MCF 10A (cell line): ENCODE measurements at regions of chr1 and their contacts with region 1.

Region 1: DNA sequence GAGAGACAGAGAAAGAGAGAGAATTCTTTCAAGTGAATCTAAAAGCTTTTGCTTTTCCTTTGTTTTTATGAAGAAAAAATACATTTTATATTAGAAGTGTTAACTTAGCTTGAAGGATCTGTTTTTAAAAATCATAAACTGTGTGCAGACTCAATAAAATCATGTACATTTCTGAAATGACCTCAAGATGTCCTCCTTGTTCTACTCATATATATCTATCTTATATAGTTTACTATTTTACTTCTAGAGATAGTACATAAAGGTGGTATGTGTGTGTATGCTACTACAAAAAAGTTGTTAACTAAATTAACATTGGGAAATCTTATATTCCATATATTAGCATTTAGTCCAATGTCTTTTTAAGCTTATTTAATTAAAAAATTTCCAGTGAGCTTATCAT is 117.6 kb downstream of the PTPRC start:
- DNase-seq: peak; percentile 45
- H3K4me3 Mint-ChIP-seq: no peak overlapping the region
- H3K27ac Mint-ChIP-seq: no peak overlapping the region
- H3K4me1 Mint-ChIP-seq: no peaks in the 10 kb centered on the region
- H3K27me3 Mint-ChIP-seq: no peaks in the 10 kb centered on the region
- CTCF ChIP-seq: peak; percentile 50

Region 2: DNA sequence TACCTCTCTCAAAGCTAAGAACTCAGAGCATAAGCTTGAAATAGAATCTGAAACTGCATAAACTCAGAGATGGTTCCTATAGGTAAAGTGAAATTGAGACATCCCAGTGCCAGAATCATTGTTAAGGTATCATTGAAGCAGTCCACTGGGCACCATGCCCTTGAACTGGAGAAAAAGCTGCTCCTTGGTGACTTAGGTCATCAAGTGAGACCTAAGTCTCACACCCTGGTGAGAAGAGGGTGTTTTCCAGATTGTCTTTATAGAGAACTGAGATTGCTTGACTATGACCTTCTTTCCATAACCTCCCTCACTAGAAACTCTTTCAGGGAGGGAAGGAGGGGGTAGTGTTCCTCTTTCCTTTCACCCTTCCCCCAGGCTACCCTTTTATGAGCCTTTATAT is 206.6 kb before region 1 on chr1:
- CTCF ChIA-PET with region 1: no interaction called
- POLR2A ChIA-PET with region 1: no interaction called
- intact Hi-C with region 1: no loop called
- DNase-seq: no peak
- H3K4me3 Mint-ChIP-seq: no peak overlapping the region
- H3K27ac Mint-ChIP-seq: no peak overlapping the region
- H3K4me1 Mint-ChIP-seq: no peaks in the 10 kb centered on the region
- H3K27me3 Mint-ChIP-seq: no peaks in the 10 kb centered on the region
- CTCF ChIP-seq: no peak

Region 3: DNA sequence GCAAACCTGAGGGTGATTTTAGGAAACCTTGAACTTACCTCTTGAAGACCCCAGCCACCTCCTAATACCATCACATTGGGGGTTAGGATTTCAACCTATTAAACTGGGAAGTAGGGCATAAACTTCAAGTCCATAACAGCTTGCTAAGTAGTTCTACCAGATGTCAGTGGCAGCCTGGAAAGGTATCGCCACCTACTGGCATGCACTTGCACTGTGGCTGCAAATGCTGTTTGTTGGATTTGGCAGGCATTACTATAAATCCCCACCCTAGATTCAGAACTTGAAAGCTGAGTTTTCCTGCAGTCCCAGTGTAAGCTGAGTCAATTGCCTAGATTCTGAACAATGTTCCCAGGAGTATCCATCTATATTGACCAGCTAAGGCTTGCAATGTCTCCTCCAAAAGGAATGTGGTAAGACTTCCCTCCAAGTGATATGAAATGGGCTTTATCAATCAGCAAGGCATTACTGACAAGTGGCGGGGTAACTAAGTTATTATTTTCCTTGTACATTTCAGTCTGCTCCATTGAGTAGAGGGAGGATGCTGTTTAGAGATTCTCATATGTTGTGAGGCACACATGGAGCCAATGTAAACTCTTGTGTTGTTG is 356.9 kb after region 1 on chr1:
- CTCF ChIA-PET with region 1: interaction called, 6 read pairs
- POLR2A ChIA-PET with region 1: no interaction called
- intact Hi-C with region 1: loop called (anchors 1 kb)
- DNase-seq: peak; percentile 70
- H3K4me3 Mint-ChIP-seq: no peak overlapping the region
- H3K27ac Mint-ChIP-seq: no peak overlapping the region
- H3K4me1 Mint-ChIP-seq: no peaks in the 10 kb centered on the region
- H3K27me3 Mint-ChIP-seq: no peaks in the 10 kb centered on the region
- CTCF ChIP-seq: peak; percentile 82

Region 4: DNA sequence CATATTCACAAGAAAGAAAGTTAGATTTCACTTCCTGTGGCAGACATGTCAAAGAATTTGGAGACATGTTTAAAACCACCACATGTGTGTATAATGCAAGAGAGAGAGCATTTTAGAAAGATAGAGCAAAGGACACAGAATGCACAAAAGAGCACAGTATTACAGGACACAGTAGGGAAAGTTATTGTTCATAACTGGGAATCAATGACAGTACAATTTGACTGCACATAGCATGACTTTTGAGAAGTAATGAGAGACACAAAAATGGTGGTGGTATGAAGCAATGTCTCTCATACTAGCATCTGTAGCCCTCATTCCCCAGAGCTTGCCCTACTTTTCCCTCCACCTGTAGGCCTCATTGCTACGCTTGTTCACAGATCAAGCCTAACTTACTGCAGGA is 381.6 kb after region 1 on chr1:
- CTCF ChIA-PET with region 1: no interaction called
- POLR2A ChIA-PET with region 1: no interaction called
- intact Hi-C with region 1: no loop called
- DNase-seq: no peak
- H3K4me3 Mint-ChIP-seq: no peak overlapping the region
- H3K27ac Mint-ChIP-seq: no peak overlapping the region
- H3K4me1 Mint-ChIP-seq: no peaks in the 10 kb centered on the region
- H3K27me3 Mint-ChIP-seq: no peaks in the 10 kb centered on the region
- CTCF ChIP-seq: no peak

Region 5: DNA sequence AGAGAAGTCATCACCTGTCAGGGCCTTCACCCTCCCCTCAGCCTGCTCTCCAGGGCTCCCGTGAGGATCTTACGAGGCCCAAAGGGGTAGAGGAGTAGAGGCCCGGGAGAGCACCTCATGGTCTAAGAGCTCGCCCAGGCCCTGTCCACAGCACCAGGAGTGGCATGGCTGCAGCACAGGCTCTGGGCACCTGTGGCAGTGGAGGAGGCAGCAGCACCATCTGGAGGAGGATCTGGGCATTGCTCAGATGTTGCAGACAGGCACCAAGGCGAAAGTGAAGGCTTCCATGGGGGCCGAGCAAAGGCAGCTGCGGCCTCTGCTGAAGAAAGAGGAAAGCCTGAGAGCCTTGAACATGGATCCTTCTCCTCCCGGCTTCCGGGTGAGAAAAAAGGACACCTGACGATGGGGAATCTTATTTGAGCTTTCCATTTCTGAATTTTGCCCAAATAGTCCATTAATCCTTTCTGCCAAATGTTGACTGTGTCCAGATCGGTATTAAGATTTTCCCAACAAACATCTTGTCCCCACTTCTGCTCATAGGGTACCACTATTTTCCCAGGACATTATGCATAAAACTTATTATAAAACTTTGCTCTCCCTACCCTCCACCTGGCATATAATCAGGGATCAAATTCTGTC is 487.1 kb after region 1 on chr1:
- CTCF ChIA-PET with region 1: interaction called, 21 read pairs
- POLR2A ChIA-PET with region 1: no interaction called
- intact Hi-C with region 1: loop called (anchors 1 kb)
- DNase-seq: peak; percentile 71
- H3K4me3 Mint-ChIP-seq: no peak overlapping the region
- H3K27ac Mint-ChIP-seq: no peak overlapping the region
- H3K4me1 Mint-ChIP-seq: peaks cover 6% of the 10 kb centered on the region
- H3K27me3 Mint-ChIP-seq: no peaks in the 10 kb centered on the region
- CTCF ChIP-seq: peak; percentile 90

Region 6: GRCh38 chr1:199422198-199422597 is 665.7 kb after region 1 on chr1:
- CTCF ChIA-PET with region 1: interaction called, 7 read pairs
- POLR2A ChIA-PET with region 1: no interaction called
- intact Hi-C with region 1: loop called (anchors 5 kb)
- DNase-seq: peak; percentile 75
- H3K4me3 Mint-ChIP-seq: no peak overlapping the region
- H3K27ac Mint-ChIP-seq: no peak overlapping the region
- H3K4me1 Mint-ChIP-seq: no peaks in the 10 kb centered on the region
- H3K27me3 Mint-ChIP-seq: no peaks in the 10 kb centered on the region
- CTCF ChIP-seq: peak; percentile 56

Region 7: GRCh38 chr1:199463521-199464128 is 707.2 kb after region 1 on chr1:
- CTCF ChIA-PET with region 1: interaction called, 11 read pairs
- POLR2A ChIA-PET with region 1: no interaction called
- intact Hi-C with region 1: loop called (anchors 5 kb)
- DNase-seq: peak; percentile 80
- H3K4me3 Mint-ChIP-seq: no peak overlapping the region
- H3K27ac Mint-ChIP-seq: no peak overlapping the region
- H3K4me1 Mint-ChIP-seq: no peaks in the 10 kb centered on the region
- H3K27me3 Mint-ChIP-seq: no peaks in the 10 kb centered on the region
- CTCF ChIP-seq: peak; percentile 79

Region 8: GRCh38 chr1:199551967-199552565 is 795.6 kb after region 1 on chr1:
- CTCF ChIA-PET with region 1: interaction called, 7 read pairs
- POLR2A ChIA-PET with region 1: interaction called, 3 read pairs
- intact Hi-C with region 1: loop called (anchors 1 kb)
- DNase-seq: peak; percentile 74
- H3K4me3 Mint-ChIP-seq: no peak overlapping the region
- H3K27ac Mint-ChIP-seq: no peak overlapping the region
- H3K4me1 Mint-ChIP-seq: no peaks in the 10 kb centered on the region
- H3K27me3 Mint-ChIP-seq: no peaks in the 10 kb centered on the region
- CTCF ChIP-seq: peak; percentile 96

Region 9: DNA sequence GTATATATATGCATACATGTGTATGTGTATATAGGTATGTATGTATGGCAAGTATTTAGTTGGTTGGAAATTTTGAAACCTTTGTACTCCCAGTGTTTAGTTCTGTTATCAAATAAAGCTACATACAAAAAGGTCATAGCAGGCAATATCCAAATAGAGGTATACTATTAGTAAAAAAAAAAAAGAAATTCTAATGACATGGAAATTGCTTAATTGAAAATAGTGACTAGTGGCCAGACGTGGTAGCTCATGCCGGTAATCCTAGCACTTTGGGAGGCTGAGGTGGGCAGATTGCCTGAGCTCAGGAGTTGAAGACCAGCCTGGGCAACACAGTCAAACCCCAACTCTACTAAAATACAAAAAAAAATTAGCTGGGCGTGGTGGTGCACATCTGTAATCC is 919.5 kb after region 1 on chr1:
- CTCF ChIA-PET with region 1: interaction called, 3 read pairs
- POLR2A ChIA-PET with region 1: no interaction called
- intact Hi-C with region 1: loop called (anchors 10 kb)
- DNase-seq: no peak
- H3K4me3 Mint-ChIP-seq: no peak overlapping the region
- H3K27ac Mint-ChIP-seq: no peak overlapping the region
- H3K4me1 Mint-ChIP-seq: no peaks in the 10 kb centered on the region
- H3K27me3 Mint-ChIP-seq: no peaks in the 10 kb centered on the region
- CTCF ChIP-seq: no peak